ENCODE measurements at regions of chr19 and their contacts with region 1.

Region 1: GRCh38 chr19:47296036-47296435 is 13.6 kb upstream of the C5AR1 start:
- DNase-seq: peak; percentile 80 to 91 (median 87)
- H3K4me3 ChIP-seq: no peak overlapping the region
- H3K27ac ChIP-seq: no peak overlapping the region
- H3K4me1 ChIP-seq: no peaks in the 10 kb centered on the region
- H3K27me3 ChIP-seq: no peaks in the 10 kb centered on the region
- CTCF ChIP-seq: peak; percentile 76 to 92 (median 82)
- POLR2A ChIP-seq: no peak

Region 2: GRCh38 chr19:47391510-47392223 is 95.6 kb after region 1 on chr19:
- intact Hi-C with region 1: loop called (anchors 2 to 5 kb)
- DNase-seq: peak; percentile 76 to 90 (median 79)
- H3K4me3 ChIP-seq: no peak overlapping the region
- H3K27ac ChIP-seq: no peak overlapping the region
- H3K4me1 ChIP-seq: no peaks in the 10 kb centered on the region
- H3K27me3 ChIP-seq: no peaks in the 10 kb centered on the region
- CTCF ChIP-seq: peak; percentile 78 to 91 (median 89)
- POLR2A ChIP-seq: no peak

Region 3: DNA sequence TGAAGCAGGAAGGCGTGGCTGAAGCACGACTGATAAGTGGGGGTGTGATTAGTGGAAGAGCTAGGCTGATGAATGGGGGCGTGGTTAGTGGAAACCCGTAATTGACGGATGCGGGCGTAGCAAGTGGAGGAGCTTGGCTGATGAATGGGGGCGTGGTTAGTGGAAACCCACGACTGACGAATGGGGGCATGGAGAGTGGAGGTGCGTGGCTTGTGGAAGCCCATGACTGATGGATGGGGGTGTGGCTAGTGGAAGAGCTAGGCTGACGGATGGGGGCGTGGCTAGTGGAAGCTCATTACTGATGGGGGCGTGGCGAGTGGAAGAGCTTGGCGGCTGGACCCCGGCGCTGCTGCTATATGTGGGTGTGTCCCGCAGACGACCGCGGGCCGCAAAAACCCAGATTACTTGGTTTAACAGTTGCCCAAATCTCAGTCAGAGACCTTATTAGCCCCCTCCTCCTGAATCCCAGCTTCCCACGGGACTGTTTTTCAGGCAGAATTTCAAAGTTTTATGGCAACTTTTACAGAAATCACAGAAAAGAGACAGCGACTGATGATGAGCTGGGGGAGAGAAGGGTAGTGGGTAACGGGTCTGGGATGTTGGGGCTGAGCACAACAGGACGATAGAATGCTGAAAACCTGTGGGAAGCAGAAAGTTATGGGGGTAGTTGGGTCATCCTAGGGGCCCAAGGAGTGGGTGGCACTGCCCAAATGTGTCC is 132.3 kb after region 1 on chr19:
- intact Hi-C with region 1: loop called in 1 of 2 experiments (anchors 10 kb)
- DNase-seq: peak; percentile 80 to 95 (median 88)
- H3K4me3 ChIP-seq: no peak overlapping the region
- H3K27ac ChIP-seq: peak overlapping the region in 1 of 5 donors; percentile 23
- H3K4me1 ChIP-seq: peaks cover 7 to 10% of the 10 kb centered on the region in 2 donors
- H3K27me3 ChIP-seq: peaks cover 55% of the 10 kb centered on the region
- CTCF ChIP-seq: peak in 1 of 6 experiments; percentile 3
- POLR2A ChIP-seq: no peak